Caco-2 (cell line): ENCODE measurements at regions of chr2 and their contacts with region 1.

Region 1: GRCh38 chr2:158456309-158457066 is at the starts of genes CCDC148 and PKP4:
- DNase-seq: peak; percentile 96
- H3K4me3 ChIP-seq: peak within 1 kb of the TSS; percentile 93
- H3K4me3 Mint-ChIP-seq: peak within 1 kb of the TSS; percentile 98
- H3K27ac Mint-ChIP-seq: peak within 1 kb of the TSS; percentile 97
- H3K4me1 ChIP-seq: peaks cover 24% of the 10 kb centered on the region
- H3K4me1 Mint-ChIP-seq: peaks cover 13% of the 10 kb centered on the region
- H3K27me3 ChIP-seq: no peaks in the 10 kb centered on the region
- H3K27me3 Mint-ChIP-seq: no peaks in the 10 kb centered on the region
- CTCF ChIP-seq: no peak
- total RNA-seq, gene CCDC148: 5.3 and 6.3 TPM in 2 replicates
- total RNA-seq, gene PKP4: 140 and 147 TPM in 2 replicates

Region 2: GRCh38 chr2:158034199-158034866 is 422.2 kb before region 1 on chr2:
- CTCF ChIA-PET with region 1: no interaction called
- POLR2A ChIA-PET with region 1: no interaction called
- intact Hi-C with region 1: loop called (anchors 1 kb)
- DNase-seq: peak; percentile 69 to 75
- H3K4me3 ChIP-seq: no peak overlapping the region
- H3K4me3 Mint-ChIP-seq: no peak overlapping the region
- H3K27ac Mint-ChIP-seq: no peak overlapping the region
- H3K4me1 ChIP-seq: no peaks in the 10 kb centered on the region
- H3K4me1 Mint-ChIP-seq: peaks cover 9% of the 10 kb centered on the region
- H3K27me3 ChIP-seq: no peaks in the 10 kb centered on the region
- H3K27me3 Mint-ChIP-seq: peaks cover 7% of the 10 kb centered on the region
- CTCF ChIP-seq: peak; percentile 71 to 74

Region 3: DNA sequence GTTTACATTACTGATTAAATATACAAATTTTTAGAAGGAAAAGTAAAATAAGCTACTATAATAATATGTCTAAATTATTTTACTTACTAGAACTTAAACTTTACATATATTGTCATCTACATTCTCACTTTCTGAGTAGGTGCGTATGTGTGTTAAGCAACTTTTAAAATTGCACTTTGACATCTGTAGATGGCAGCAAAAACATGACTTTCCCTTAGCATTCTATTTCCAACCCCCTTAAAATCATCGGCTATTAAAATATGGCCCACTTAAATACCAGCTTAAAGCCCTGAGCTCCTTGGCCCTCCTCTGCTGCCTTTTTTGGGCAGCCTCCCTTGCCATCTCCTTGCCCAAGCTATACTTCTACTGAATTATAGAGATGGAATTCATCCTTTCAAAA is 276.8 kb before region 1 on chr2:
- CTCF ChIA-PET with region 1: interaction called, 3 read pairs
- POLR2A ChIA-PET with region 1: no interaction called
- intact Hi-C with region 1: loop called (anchors 2 kb)
- DNase-seq: no peak
- H3K4me3 ChIP-seq: no peak overlapping the region
- H3K4me3 Mint-ChIP-seq: no peak overlapping the region
- H3K27ac Mint-ChIP-seq: no peak overlapping the region
- H3K4me1 ChIP-seq: peaks cover 19% of the 10 kb centered on the region
- H3K4me1 Mint-ChIP-seq: peaks cover 25% of the 10 kb centered on the region
- H3K27me3 ChIP-seq: no peaks in the 10 kb centered on the region
- H3K27me3 Mint-ChIP-seq: no peaks in the 10 kb centered on the region
- CTCF ChIP-seq: peak; percentile 31 to 59

Region 4: DNA sequence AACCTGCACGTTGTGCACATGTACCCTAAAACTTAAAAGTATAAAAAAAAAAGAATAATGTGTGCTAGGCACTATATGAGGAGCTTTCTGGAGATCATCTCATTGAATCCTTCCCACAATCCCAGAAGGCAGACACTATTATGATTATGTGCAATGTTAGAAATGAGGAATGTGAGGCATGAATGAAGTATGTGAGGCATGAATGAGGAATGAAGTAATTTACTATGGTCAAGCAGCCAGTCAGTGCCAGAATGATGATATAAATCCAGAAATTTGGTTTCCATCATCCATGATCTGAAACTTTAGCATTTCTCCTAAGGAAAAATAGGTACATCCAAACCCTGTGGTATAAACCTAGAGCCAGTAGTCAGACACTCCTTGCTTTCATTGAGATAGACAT is 42.0 kb before region 1 on chr2:
- CTCF ChIA-PET with region 1: no interaction called
- POLR2A ChIA-PET with region 1: no interaction called
- intact Hi-C with region 1: loop called (anchors 2 kb)
- DNase-seq: no peak
- H3K4me3 ChIP-seq: no peak overlapping the region
- H3K4me3 Mint-ChIP-seq: no peak overlapping the region
- H3K27ac Mint-ChIP-seq: no peak overlapping the region
- H3K4me1 ChIP-seq: peaks cover 19% of the 10 kb centered on the region; the same call in 1 of the 2 replicates
- H3K4me1 Mint-ChIP-seq: peaks cover 20% of the 10 kb centered on the region
- H3K27me3 ChIP-seq: no peaks in the 10 kb centered on the region
- H3K27me3 Mint-ChIP-seq: no peaks in the 10 kb centered on the region
- CTCF ChIP-seq: no peak

Region 5: GRCh38 chr2:158518075-158518474 is 61.6 kb after region 1 on chr2:
- CTCF ChIA-PET with region 1: interaction called, 5 read pairs
- POLR2A ChIA-PET with region 1: interaction called, 4 read pairs
- intact Hi-C with region 1: loop called (anchors 1 kb)
- DNase-seq: peak; percentile 75 to 84
- H3K4me3 ChIP-seq: no peak overlapping the region
- H3K4me3 Mint-ChIP-seq: peak overlapping the region; percentile 35
- H3K27ac Mint-ChIP-seq: peak overlapping the region; percentile 84
- H3K4me1 ChIP-seq: peaks cover 18% of the 10 kb centered on the region
- H3K4me1 Mint-ChIP-seq: peaks cover 28% of the 10 kb centered on the region
- H3K27me3 ChIP-seq: no peaks in the 10 kb centered on the region
- H3K27me3 Mint-ChIP-seq: no peaks in the 10 kb centered on the region
- CTCF ChIP-seq: no peak

Region 6: GRCh38 chr2:158561054-158561453 is 104.6 kb after region 1 on chr2:
- CTCF ChIA-PET with region 1: interaction called, 3 read pairs
- POLR2A ChIA-PET with region 1: interaction called, 6 read pairs
- intact Hi-C with region 1: loop called (anchors 1 kb)
- DNase-seq: peak in 1 of 2 experiments; percentile 56
- H3K4me3 ChIP-seq: no peak overlapping the region
- H3K4me3 Mint-ChIP-seq: peak overlapping the region; percentile 57
- H3K27ac Mint-ChIP-seq: peak overlapping the region; percentile 81
- H3K4me1 ChIP-seq: peaks cover 29% of the 10 kb centered on the region
- H3K4me1 Mint-ChIP-seq: peaks cover 20% of the 10 kb centered on the region
- H3K27me3 ChIP-seq: no peaks in the 10 kb centered on the region
- H3K27me3 Mint-ChIP-seq: no peaks in the 10 kb centered on the region
- CTCF ChIP-seq: no peak

Region 7: GRCh38 chr2:158676696-158677095 is 220.2 kb after region 1 on chr2:
- CTCF ChIA-PET with region 1: no interaction called
- POLR2A ChIA-PET with region 1: no interaction called
- intact Hi-C with region 1: no loop called
- DNase-seq: no peak
- H3K4me3 ChIP-seq: no peak overlapping the region
- H3K4me3 Mint-ChIP-seq: no peak overlapping the region
- H3K27ac Mint-ChIP-seq: no peak overlapping the region
- H3K4me1 ChIP-seq: no peaks in the 10 kb centered on the region
- H3K4me1 Mint-ChIP-seq: no peaks in the 10 kb centered on the region
- H3K27me3 ChIP-seq: no peaks in the 10 kb centered on the region
- H3K27me3 Mint-ChIP-seq: no peaks in the 10 kb centered on the region
- CTCF ChIP-seq: no peak